Lower leg skin (tissue), 4 donors: ENCODE measurements at regions of chr2 and their contacts with region 1.

Region 1: GRCh38 chr2:180520206-180520605 is 460.2 kb upstream of the UBE2E3 start:
- DNase-seq: no peak
- H3K4me3 ChIP-seq: no peak overlapping the region
- CTCF ChIP-seq: no peak
- POLR2A ChIP-seq: no peak

Region 2: GRCh38 chr2:178679891-178680290 is 1840.3 kb before region 1 on chr2:
- intact Hi-C with region 1: loop called (anchors 5 kb)
- DNase-seq: no peak
- H3K4me3 ChIP-seq: no peak overlapping the region
- CTCF ChIP-seq: no peak
- POLR2A ChIP-seq: no peak